ENCODE measurements at regions of chr16 and their contacts with region 1.

Region 1: DNA sequence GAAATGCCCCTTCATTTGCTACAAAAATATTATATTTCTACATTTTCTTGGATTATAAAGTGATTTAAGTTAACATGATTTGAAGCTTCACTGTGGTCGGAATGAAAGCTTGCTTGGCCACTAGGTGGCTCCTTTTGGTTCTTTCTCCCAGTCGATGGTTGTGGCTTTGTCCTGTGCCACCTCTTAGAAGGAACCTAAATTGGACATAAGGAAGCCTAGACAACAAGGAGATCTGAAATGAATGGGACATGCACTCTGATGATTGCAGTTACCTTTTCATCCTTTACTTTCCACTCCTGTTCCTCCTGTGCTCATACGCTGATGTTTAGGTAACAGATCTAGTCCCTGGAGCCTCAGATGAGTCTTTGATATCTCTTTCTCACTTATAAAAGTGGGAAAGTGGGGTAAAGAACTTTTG is 39.2 kb downstream of the FTO start:
- DNase-seq: no peak
- ATAC-seq: peak; percentile 67
- H3K4me3 ChIP-seq: no peak overlapping the region
- H3K27ac ChIP-seq: no peak overlapping the region
- H3K4me1 ChIP-seq: peaks cover 4% of the 10 kb centered on the region
- H3K27me3 ChIP-seq: no peaks in the 10 kb centered on the region
- CTCF ChIP-seq: peak; percentile 47 to 70 (median 69)
- EP300 ChIP-seq: no peak
- POLR2A ChIP-seq: no peak
- RAD21 ChIP-seq: peak; percentile 39

Region 2: GRCh38 chr16:53730693-53731092 is 12.5 kb before region 1 on chr16:
- CTCF ChIA-PET with region 1: interaction called, 14 read pairs
- POLR2A ChIA-PET with region 1: interaction called, 9 read pairs
- RAD21 ChIA-PET with region 1: no interaction called
- SMC1A ChIA-PET with region 1: interaction called, 6 read pairs
- in situ Hi-C with region 1: no loop called
- intact Hi-C with region 1: no loop called
- DNase-seq: no peak
- ATAC-seq: no peak
- H3K4me3 ChIP-seq: no peak overlapping the region
- H3K27ac ChIP-seq: no peak overlapping the region
- H3K4me1 ChIP-seq: peaks cover 4% of the 10 kb centered on the region
- H3K27me3 ChIP-seq: no peaks in the 10 kb centered on the region
- CTCF ChIP-seq: no peak
- EP300 ChIP-seq: no peak
- POLR2A ChIP-seq: no peak
- RAD21 ChIP-seq: no peak

Region 3: GRCh38 chr16:53755536-53755910 is 12.4 kb after region 1 on chr16:
- CTCF ChIA-PET with region 1: interaction called, 44 read pairs
- POLR2A ChIA-PET with region 1: interaction called, 5 read pairs
- RAD21 ChIA-PET with region 1: interaction called, 8 read pairs
- SMC1A ChIA-PET with region 1: interaction called, 28 read pairs
- in situ Hi-C with region 1: no loop called
- intact Hi-C with region 1: no loop called
- DNase-seq: no peak
- ATAC-seq: no peak
- H3K4me3 ChIP-seq: no peak overlapping the region
- H3K27ac ChIP-seq: no peak overlapping the region
- H3K4me1 ChIP-seq: no peaks in the 10 kb centered on the region
- H3K27me3 ChIP-seq: no peaks in the 10 kb centered on the region
- CTCF ChIP-seq: no peak
- EP300 ChIP-seq: no peak
- POLR2A ChIP-seq: no peak
- RAD21 ChIP-seq: no peak

Region 4: GRCh38 chr16:53859995-53860540 is 116.9 kb after region 1 on chr16:
- CTCF ChIA-PET with region 1: no interaction called
- POLR2A ChIA-PET with region 1: no interaction called
- RAD21 ChIA-PET with region 1: no interaction called
- SMC1A ChIA-PET with region 1: no interaction called
- in situ Hi-C with region 1: no loop called
- intact Hi-C with region 1: no loop called
- DNase-seq: no peak
- ATAC-seq: no peak
- H3K4me3 ChIP-seq: no peak overlapping the region
- H3K27ac ChIP-seq: no peak overlapping the region
- H3K4me1 ChIP-seq: no peaks in the 10 kb centered on the region
- H3K27me3 ChIP-seq: no peaks in the 10 kb centered on the region
- CTCF ChIP-seq: no peak
- EP300 ChIP-seq: no peak
- POLR2A ChIP-seq: no peak
- RAD21 ChIP-seq: no peak